Naive thymus-derived CD4-positive, alpha-beta T cell (primary cell): ENCODE measurements at regions of chr12 and their contacts with region 1.

Region 1: DNA sequence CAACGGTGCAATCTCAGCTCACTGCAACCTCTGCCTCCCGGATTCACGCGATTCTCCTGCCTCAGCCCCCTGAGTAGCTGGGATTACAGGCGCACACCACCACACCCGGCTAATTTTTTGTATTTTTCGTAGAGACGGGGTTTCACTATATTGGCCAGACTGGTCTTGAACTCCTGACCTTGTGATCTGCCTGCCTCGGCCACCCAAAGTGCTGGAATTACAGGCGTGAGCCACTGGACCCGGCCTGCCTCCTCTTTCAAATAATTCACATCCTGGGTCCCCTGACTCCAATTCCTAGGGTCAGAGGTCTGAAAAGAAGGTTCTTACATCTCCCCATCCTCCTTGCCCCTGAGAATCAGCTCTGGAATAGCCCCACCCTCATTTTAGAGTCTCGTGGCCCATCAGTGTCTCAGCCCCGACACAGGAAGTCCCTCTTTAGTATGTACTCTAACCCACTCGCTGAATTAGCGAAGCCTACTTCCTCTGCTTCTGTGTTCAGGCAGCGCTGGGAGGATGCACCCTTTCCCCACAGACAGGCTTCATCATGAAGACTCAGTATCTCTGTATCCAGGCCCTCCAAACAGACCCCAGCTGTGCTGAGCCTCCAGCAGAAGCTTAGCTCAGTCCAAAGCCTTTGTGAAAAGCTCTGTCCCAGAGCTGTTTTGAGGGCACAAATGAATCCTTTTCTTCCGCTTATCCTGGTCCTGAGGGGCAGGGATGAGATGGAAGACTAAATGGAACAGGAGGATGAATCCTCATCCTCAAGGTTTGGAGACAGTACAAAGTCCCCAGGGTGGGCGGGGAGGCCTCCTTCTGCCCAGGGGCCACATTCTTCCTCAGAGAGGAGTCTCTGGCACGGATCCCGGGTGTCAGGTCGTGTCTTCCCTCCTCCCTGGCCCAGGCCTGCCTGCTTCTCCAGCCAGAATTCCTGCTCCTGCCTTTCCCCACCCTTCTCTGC is 3.5 kb downstream of the LPAR5 start:
- DNase-seq: peak in 8 of 9 donors; percentile 43 to 75 (median 66)
- ATAC-seq: peak; percentile 81
- H3K4me3 ChIP-seq: peak overlapping the region; percentile 56
- H3K4me3 Mint-ChIP-seq: peak overlapping the region; percentile 80 to 94 (median 88)
- H3K27ac ChIP-seq: peak overlapping the region; percentile 81
- H3K27ac Mint-ChIP-seq: peak overlapping the region; percentile 94 to 99 (median 97)
- H3K4me1 ChIP-seq: peaks cover 26 to 40% of the 10 kb centered on the region in 2 donors
- H3K4me1 Mint-ChIP-seq: peaks cover 46 to 68% (median 58%) of the 10 kb centered on the region in 7 donors
- H3K27me3 ChIP-seq: no peaks in the 10 kb centered on the region
- H3K27me3 Mint-ChIP-seq: no peaks in the 10 kb centered on the region

Region 2: DNA sequence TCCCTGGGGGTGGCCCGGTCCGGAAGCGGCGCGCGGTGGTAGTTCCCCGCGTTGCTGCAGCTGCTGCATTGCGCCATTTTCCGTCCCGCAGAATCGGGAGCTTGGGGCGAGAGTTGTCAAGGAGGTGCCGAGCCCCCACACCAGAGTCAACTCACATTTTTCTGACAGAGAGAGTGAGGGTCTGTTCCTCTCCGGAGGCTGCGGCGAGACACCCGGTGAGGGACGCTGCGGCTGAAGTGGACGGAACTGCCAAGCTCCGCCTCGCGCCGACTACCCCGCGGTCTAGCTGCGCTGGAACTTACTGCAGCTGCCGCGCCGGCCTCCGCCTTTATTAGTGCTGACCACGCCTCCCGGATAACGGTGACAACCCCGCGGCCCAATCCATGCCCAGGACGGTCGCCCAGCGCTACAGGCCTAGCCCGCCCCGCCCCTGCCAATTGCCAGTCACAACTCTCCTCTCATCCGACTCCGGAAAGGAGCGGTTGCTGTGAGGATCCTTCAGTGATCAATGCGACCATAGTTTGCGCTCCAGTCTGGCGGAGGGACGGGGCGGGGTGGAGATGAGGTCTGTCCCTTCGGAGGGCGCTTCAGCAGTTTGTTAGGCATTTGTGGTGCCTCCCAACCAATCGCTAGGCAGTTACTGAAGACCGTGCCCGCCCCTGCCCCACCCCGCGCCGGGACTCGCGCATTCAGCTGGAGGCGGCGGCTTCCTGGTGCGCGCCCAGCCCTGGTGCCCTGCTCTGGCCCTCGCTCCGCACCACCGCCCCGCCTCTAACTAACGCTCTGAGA is 161.7 kb before region 1 on chr12 and contains the start of gene VAMP1:
- CTCF ChIA-PET with region 1: no interaction called
- POLR2A ChIA-PET with region 1: no interaction called
- intact Hi-C with region 1: no loop called
- DNase-seq: peak; percentile 90 to 97 (median 95)
- ATAC-seq: peak; percentile 94
- H3K4me3 ChIP-seq: peak within 1 kb of the TSS; percentile 96
- H3K4me3 Mint-ChIP-seq: peak within 1 kb of the TSS; percentile 85 to 96 (median 92)
- H3K27ac ChIP-seq: peak within 1 kb of the TSS; percentile 75
- H3K27ac Mint-ChIP-seq: peak within 1 kb of the TSS; percentile 79 to 99 (median 95)
- H3K4me1 ChIP-seq: peaks cover 38 to 39% of the 10 kb centered on the region in 2 donors
- H3K4me1 Mint-ChIP-seq: peaks cover 26 to 59% (median 52%) of the 10 kb centered on the region in 7 donors
- H3K27me3 ChIP-seq: no peaks in the 10 kb centered on the region
- H3K27me3 Mint-ChIP-seq: peaks cover 0 to 5% (median 0%) of the 10 kb centered on the region in 5 donors
- total RNA-seq, gene VAMP1: 38.7 to 123 (median 47.9) TPM

Region 3: GRCh38 chr12:6620137-6620884 is 12.0 kb before region 1 on chr12:
- CTCF ChIA-PET with region 1: interaction called, 7 read pairs
- POLR2A ChIA-PET with region 1: interaction called, 46 read pairs
- intact Hi-C with region 1: loop called (anchors 1 to 2 kb)
- DNase-seq: peak in 7 of 9 donors; percentile 49 to 63 (median 60)
- ATAC-seq: peak; percentile 88
- H3K4me3 ChIP-seq: no peak overlapping the region
- H3K4me3 Mint-ChIP-seq: peak overlapping the region in 8 of 10 donors; percentile 40 to 83 (median 68)
- H3K27ac ChIP-seq: peak overlapping the region; percentile 46
- H3K27ac Mint-ChIP-seq: peak overlapping the region in 6 of 9 donors; percentile 45 to 88 (median 84)
- H3K4me1 ChIP-seq: peaks cover 0 to 5% of the 10 kb centered on the region in 2 donors
- H3K4me1 Mint-ChIP-seq: peaks cover 0 to 42% (median 26%) of the 10 kb centered on the region in 7 donors
- H3K27me3 ChIP-seq: no peaks in the 10 kb centered on the region
- H3K27me3 Mint-ChIP-seq: no peaks in the 10 kb centered on the region